BJ (cell line): ENCODE measurements at regions of chr12 and their contacts with region 1.

Region 1: GRCh38 chr12:109435428-109436187 is 41.5 kb downstream of the KCTD10 start:
- DNase-seq: no peak
- H3K4me3 ChIP-seq: no peak overlapping the region
- H3K27me3 ChIP-seq: no peaks in the 10 kb centered on the region
- CTCF ChIP-seq: no peak

Region 2: GRCh38 chr12:109494348-109494881 is 58.8 kb after region 1 on chr12:
- CTCF ChIA-PET with region 1: interaction called, 11 read pairs
- POLR2A ChIA-PET with region 1: no interaction called
- DNase-seq: no peak
- H3K4me3 ChIP-seq: no peak overlapping the region
- H3K27me3 ChIP-seq: no peaks in the 10 kb centered on the region
- CTCF ChIP-seq: no peak